ENCODE measurements at regions of chr3 and their contacts with region 1.

Region 1: DNA sequence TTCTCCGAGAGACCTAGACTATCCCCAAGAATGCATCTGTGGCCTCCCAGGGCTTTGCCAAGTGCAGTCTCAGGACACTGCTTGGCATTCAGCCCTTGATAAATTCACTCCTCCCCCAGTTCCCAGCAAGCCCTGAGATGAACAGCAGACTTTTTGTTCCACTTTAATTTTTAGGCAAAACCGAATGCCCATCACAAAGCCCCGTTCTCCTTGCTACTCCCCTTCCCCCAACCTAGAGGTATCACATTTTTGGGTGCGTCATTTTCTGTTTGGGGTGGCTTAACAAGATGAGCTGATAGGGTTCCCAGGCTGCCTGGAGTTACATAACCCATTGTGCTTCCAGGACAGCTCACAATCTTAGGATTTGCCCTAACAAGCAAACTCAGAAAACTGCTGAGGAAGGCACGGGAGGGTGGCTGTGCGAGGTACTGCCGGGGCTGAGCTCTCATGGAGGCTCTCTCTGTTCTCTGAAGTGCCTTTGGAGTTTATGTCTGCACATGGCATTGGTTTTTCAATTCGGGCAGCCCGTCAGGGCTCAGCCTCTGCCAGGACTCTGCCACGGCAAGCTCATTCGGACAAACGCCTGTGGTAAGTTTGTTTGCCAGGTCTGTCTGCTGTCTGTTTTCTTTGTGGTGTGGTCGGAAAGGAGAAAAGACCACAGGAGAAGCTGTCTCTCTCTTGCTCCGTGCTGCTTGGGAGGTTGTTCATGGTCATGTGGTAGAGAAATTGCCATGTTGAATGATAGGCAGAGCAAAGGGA is at the start of gene TRAK1:
- DNase-seq: no peak
- H3K4me3 Mint-ChIP-seq: no peak within 1 kb of the TSS
- H3K27ac Mint-ChIP-seq: peak within 1 kb of the TSS; percentile 64
- H3K4me1 Mint-ChIP-seq: peaks cover 53% of the 10 kb centered on the region
- H3K27me3 Mint-ChIP-seq: no peaks in the 10 kb centered on the region
- total RNA-seq, gene TRAK1: 37.8 and 40.9 TPM in 2 replicates

Region 2: GRCh38 chr3:40337136-40338108 is 1753.7 kb before region 1 on chr3:
- intact Hi-C with region 1: loop called (anchors 10 kb)
- DNase-seq: no peak
- H3K4me3 Mint-ChIP-seq: no peak overlapping the region
- H3K27ac Mint-ChIP-seq: peak overlapping the region; percentile 87
- H3K4me1 Mint-ChIP-seq: peaks cover 19% of the 10 kb centered on the region
- H3K27me3 Mint-ChIP-seq: peaks cover 2% of the 10 kb centered on the region

Region 3: GRCh38 chr3:41673650-41674049 is 417.5 kb before region 1 on chr3:
- intact Hi-C with region 1: no loop called
- DNase-seq: no peak
- H3K4me3 Mint-ChIP-seq: no peak overlapping the region
- H3K27ac Mint-ChIP-seq: no peak overlapping the region
- H3K4me1 Mint-ChIP-seq: no peaks in the 10 kb centered on the region
- H3K27me3 Mint-ChIP-seq: no peaks in the 10 kb centered on the region

Region 4: DNA sequence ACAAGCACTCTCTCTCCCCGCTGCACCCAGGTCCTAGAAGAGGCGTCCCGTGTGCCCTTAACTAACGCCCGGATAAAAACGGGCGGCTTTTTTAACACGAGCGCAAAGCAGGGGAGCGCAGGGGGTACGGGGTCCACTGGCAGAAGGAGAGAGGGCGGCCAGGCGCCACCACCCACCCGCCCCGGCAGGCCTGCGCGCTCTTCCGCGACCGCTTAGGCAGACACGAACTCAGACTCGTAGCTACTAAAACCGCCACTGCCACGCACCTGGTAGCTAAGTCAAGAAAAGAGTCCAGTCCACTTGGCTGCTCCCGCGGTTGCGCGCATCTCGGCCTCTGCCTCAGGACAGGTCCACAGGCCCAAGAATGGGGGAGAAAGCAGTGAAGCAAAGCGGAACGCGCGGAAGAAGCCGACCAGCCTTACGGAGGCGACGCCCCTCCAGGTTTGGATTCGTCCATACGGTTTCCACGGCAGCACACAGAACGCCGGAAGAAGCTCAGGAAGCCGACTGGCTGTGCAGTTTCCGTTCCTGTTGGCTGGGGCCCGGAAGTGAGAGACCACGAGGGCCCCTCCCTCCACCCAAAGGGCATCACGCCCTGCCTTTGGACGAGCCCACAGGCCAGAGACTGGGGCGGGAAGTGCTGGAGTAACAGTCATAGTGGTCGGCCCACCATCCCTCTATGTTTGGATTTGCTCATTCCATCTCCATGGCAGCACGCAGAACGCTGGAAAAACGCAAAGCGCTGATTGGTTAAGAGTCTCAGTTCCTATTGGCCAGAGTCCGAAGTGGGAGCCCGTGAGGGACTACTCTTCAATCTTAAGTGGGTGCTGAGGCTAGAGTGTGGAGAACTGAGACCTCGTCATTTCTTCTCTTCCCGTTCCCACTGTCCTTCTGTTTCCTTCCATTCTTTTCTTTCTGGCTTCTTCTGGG is 129.1 kb before region 1 on chr3 and contains the start of gene ULK4:
- intact Hi-C with region 1: loop called (anchors 2 kb)
- DNase-seq: peak; percentile 94
- H3K4me3 Mint-ChIP-seq: peak within 1 kb of the TSS; percentile 96
- H3K27ac Mint-ChIP-seq: peak within 1 kb of the TSS; percentile 90
- H3K4me1 Mint-ChIP-seq: peaks cover 19% of the 10 kb centered on the region
- H3K27me3 Mint-ChIP-seq: peaks cover under 1% of the 10 kb centered on the region
- total RNA-seq, gene ULK4: 7.5 and 8.1 TPM in 2 replicates

Region 5: GRCh38 chr3:42023380-42023779 is 67.8 kb before region 1 on chr3:
- intact Hi-C with region 1: loop called (anchors 1 kb)
- DNase-seq: peak; percentile 14
- H3K4me3 Mint-ChIP-seq: peak overlapping the region; percentile 37
- H3K27ac Mint-ChIP-seq: peak overlapping the region; percentile 82
- H3K4me1 Mint-ChIP-seq: peaks cover 65% of the 10 kb centered on the region
- H3K27me3 Mint-ChIP-seq: no peaks in the 10 kb centered on the region

Region 6: DNA sequence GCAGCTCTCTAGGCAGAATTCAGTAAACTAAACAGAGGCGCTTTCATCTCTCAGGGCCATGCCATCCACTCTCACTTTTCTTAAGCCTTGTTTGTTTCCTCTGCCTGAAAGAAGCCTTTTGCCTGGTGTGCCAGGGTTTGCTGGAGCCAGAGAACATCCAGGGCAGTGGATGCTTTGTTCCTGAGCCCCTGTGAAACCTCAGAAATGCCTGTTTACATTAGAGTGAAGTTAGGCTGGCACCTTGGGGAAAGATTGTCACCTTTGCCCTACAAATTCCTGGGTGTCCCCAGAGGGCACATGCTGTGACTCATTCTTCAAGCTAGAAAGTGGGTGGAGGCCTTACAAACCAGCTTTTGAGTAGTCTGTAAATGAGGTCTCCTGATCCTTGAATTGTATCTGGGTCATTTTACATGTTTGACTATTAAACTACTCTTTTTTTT is 10.7 kb before region 1 on chr3:
- intact Hi-C with region 1: loop called (anchors 1 kb)
- DNase-seq: no peak
- H3K4me3 Mint-ChIP-seq: no peak overlapping the region
- H3K27ac Mint-ChIP-seq: peak overlapping the region; percentile 96
- H3K4me1 Mint-ChIP-seq: peaks cover 48% of the 10 kb centered on the region
- H3K27me3 Mint-ChIP-seq: no peaks in the 10 kb centered on the region

Measured in activated T-helper 2 cell treated with anti-CD3 and anti-CD28 coated beads, Interferon-gamma antibody, Interleukin-2, Interleukin-4, amounts not matched to agents 10 μg/mL and 5 μg/mL and 100 μg/mL, durations not matched to agents 14 hours and 24 hours and 36 hours (primary cell).